ENCODE measurements at regions of chr5 and their contacts with region 1.

Region 1: GRCh38 chr5:180290-180918 is 10.9 kb upstream of the LRRC14B start:
- DNase-seq: peak in 2 of 5 donors; percentile 28 to 31
- ATAC-seq: peak; percentile 33 to 55 (median 40)
- H3K4me3 ChIP-seq: no peak overlapping the region
- H3K27ac ChIP-seq: no peak overlapping the region
- H3K4me1 ChIP-seq: peaks cover 0 to 7% (median 0%) of the 10 kb centered on the region in 12 donors
- H3K27me3 ChIP-seq: peaks cover 0 to 6% (median 0%) of the 10 kb centered on the region in 9 donors
- CTCF ChIP-seq: no peak
- POLR2A ChIP-seq: no peak

Region 2: GRCh38 chr5:147751-148150 is 32.7 kb before region 1 on chr5:
- intact Hi-C with region 1: no loop called
- DNase-seq: no peak
- ATAC-seq: no peak
- H3K4me3 ChIP-seq: no peak overlapping the region
- H3K27ac ChIP-seq: no peak overlapping the region
- H3K4me1 ChIP-seq: no peaks in the 10 kb centered on the region
- H3K27me3 ChIP-seq: no peaks in the 10 kb centered on the region
- CTCF ChIP-seq: no peak
- POLR2A ChIP-seq: no peak

Region 3: DNA sequence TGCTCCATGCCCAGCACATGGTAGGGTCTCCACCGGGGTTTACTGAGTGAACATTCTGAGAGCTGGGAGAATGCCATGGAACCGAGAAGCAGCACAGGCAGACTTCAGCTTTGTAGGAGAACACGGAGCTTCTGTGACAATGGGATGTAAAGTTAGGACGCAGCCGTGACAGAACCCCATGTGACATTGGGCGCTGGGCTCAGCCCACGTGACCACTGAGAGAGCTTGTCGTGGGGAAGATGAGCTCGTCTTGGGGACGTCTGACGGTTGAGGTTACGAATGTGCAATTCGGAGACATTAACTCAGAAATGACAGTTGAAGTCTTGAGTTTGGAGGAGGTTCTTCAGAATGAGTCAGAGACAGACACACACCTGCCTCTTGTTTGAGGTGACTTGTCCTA is 51.3 kb after region 1 on chr5:
- intact Hi-C with region 1: no loop called
- DNase-seq: no peak
- ATAC-seq: no peak
- H3K4me3 ChIP-seq: no peak overlapping the region
- H3K27ac ChIP-seq: no peak overlapping the region
- H3K4me1 ChIP-seq: no peaks in the 10 kb centered on the region
- H3K27me3 ChIP-seq: no peaks in the 10 kb centered on the region
- CTCF ChIP-seq: no peak
- POLR2A ChIP-seq: no peak

Region 4: GRCh38 chr5:310941-311434 is 130.6 kb after region 1 on chr5:
- intact Hi-C with region 1: loop called in 1 of 10 experiments (anchors 5 kb)
- DNase-seq: no peak
- ATAC-seq: peak in 1 of 4 donors; percentile 14
- H3K4me3 ChIP-seq: no peak overlapping the region
- H3K27ac ChIP-seq: no peak overlapping the region
- H3K4me1 ChIP-seq: peaks cover 0 to 30% (median 9%) of the 10 kb centered on the region in 12 donors
- H3K27me3 ChIP-seq: no peaks in the 10 kb centered on the region
- CTCF ChIP-seq: no peak
- POLR2A ChIP-seq: no peak